ENCODE measurements at regions of chr13 and their contacts with region 1.

Region 1: DNA sequence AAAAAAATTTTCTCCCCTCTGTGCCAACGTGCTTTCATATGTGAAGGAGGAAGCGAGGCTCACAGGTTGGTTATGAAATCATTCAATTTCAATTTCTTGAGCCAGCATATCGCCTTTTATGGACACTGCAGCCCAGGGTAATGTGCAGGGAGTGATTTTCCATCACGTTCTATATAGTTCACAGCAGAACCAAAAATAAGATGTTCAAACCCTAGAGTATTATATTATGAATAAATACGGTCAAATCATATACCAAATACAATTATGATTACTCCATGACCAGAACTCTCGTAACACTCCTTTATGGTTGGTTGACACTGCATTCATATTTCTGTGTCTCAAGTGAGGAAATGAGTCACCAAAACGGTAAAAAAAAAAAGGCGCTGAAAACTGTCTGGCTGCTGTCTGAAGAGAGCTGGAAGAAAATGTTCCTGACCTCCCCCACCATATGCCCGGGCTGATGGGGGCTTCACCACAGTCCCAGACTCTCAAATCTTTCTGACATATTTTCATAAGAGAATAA is 75.8 kb upstream of the UBAC2 start:
- DNase-seq: no peak
- ATAC-seq: peak; percentile 57
- H3K4me3 ChIP-seq: no peak overlapping the region
- H3K4me3 Mint-ChIP-seq: peak overlapping the region in 2 of 10 donors; percentile 18 to 71
- H3K27ac ChIP-seq: no peak overlapping the region
- H3K27ac Mint-ChIP-seq: peak overlapping the region in 2 of 9 donors; percentile 25 to 65
- H3K4me1 ChIP-seq: no peaks in the 10 kb centered on the region
- H3K4me1 Mint-ChIP-seq: peaks cover 0 to 20% (median 9%) of the 10 kb centered on the region in 7 donors
- H3K27me3 ChIP-seq: no peaks in the 10 kb centered on the region
- H3K27me3 Mint-ChIP-seq: peaks cover 0 to 40% (median 3%) of the 10 kb centered on the region in 5 donors

Region 2: GRCh38 chr13:99093997-99094396 is 30.9 kb before region 1 on chr13:
- CTCF ChIA-PET with region 1: interaction called, 11 read pairs
- POLR2A ChIA-PET with region 1: interaction called, 3 read pairs
- intact Hi-C with region 1: no loop called
- DNase-seq: no peak
- ATAC-seq: no peak
- H3K4me3 ChIP-seq: no peak overlapping the region
- H3K4me3 Mint-ChIP-seq: no peak overlapping the region
- H3K27ac ChIP-seq: no peak overlapping the region
- H3K27ac Mint-ChIP-seq: no peak overlapping the region
- H3K4me1 ChIP-seq: no peaks in the 10 kb centered on the region
- H3K4me1 Mint-ChIP-seq: peaks cover 0 to 10% (median 5%) of the 10 kb centered on the region in 7 donors
- H3K27me3 ChIP-seq: no peaks in the 10 kb centered on the region
- H3K27me3 Mint-ChIP-seq: peaks cover 0 to 27% (median 10%) of the 10 kb centered on the region in 5 donors